ENCODE measurements at regions of chr18 and their contacts with region 1.

Region 1: GRCh38 chr18:13216092-13216582 is 2.4 kb upstream of the LDLRAD4 start:
- DNase-seq: peak; percentile 42
- H3K4me3 Mint-ChIP-seq: peak overlapping the region; percentile 85
- H3K27ac Mint-ChIP-seq: peak overlapping the region; percentile 83
- H3K4me1 Mint-ChIP-seq: peaks cover 26% of the 10 kb centered on the region
- H3K27me3 Mint-ChIP-seq: peaks cover 34% of the 10 kb centered on the region

Region 2: GRCh38 chr18:13137670-13138419 is 78.3 kb before region 1 on chr18:
- intact Hi-C with region 1: loop called (anchors 5 kb)
- DNase-seq: peak; percentile 76
- H3K4me3 Mint-ChIP-seq: peak overlapping the region; percentile 96
- H3K27ac Mint-ChIP-seq: peak overlapping the region; percentile 83
- H3K4me1 Mint-ChIP-seq: peaks cover 20% of the 10 kb centered on the region
- H3K27me3 Mint-ChIP-seq: peaks cover 12% of the 10 kb centered on the region

Region 3: GRCh38 chr18:13289481-13290205 is 73.5 kb after region 1 on chr18:
- intact Hi-C with region 1: loop called (anchors 1 kb)
- DNase-seq: no peak
- H3K4me3 Mint-ChIP-seq: no peak overlapping the region
- H3K27ac Mint-ChIP-seq: peak overlapping the region; percentile 64
- H3K4me1 Mint-ChIP-seq: peaks cover 55% of the 10 kb centered on the region
- H3K27me3 Mint-ChIP-seq: no peaks in the 10 kb centered on the region

Region 4: GRCh38 chr18:13435596-13436327 is 219.6 kb after region 1 on chr18:
- intact Hi-C with region 1: loop called (anchors 1 kb)
- DNase-seq: no peak
- H3K4me3 Mint-ChIP-seq: no peak overlapping the region
- H3K27ac Mint-ChIP-seq: peak overlapping the region; percentile 54
- H3K4me1 Mint-ChIP-seq: peaks cover 56% of the 10 kb centered on the region
- H3K27me3 Mint-ChIP-seq: no peaks in the 10 kb centered on the region

Region 5: GRCh38 chr18:13558124-13558523 is 342.0 kb after region 1 on chr18:
- intact Hi-C with region 1: loop called (anchors 2 kb)
- DNase-seq: no peak
- H3K4me3 Mint-ChIP-seq: no peak overlapping the region
- H3K27ac Mint-ChIP-seq: no peak overlapping the region
- H3K4me1 Mint-ChIP-seq: peaks cover 28% of the 10 kb centered on the region
- H3K27me3 Mint-ChIP-seq: no peaks in the 10 kb centered on the region

Region 6: GRCh38 chr18:13726232-13726971 is 510.3 kb after region 1 on chr18 and contains the starts of genes FAM210A and RNMT:
- intact Hi-C with region 1: loop called (anchors 10 kb)
- DNase-seq: peak; percentile 91
- H3K4me3 Mint-ChIP-seq: peak within 1 kb of the TSS; percentile 88
- H3K27ac Mint-ChIP-seq: peak within 1 kb of the TSS; percentile 79
- H3K4me1 Mint-ChIP-seq: peaks cover 49% of the 10 kb centered on the region
- H3K27me3 Mint-ChIP-seq: no peaks in the 10 kb centered on the region
- total RNA-seq, gene FAM210A: 30.3 and 33.8 TPM in 2 replicates
- total RNA-seq, gene RNMT: 54.0 and 54.3 TPM in 2 replicates

Measured in activated T-helper 2 cell treated with anti-CD3 and anti-CD28 coated beads, Interferon-gamma antibody, Interleukin-2, Interleukin-4, amounts not matched to agents 10 μg/mL and 5 μg/mL and 100 μg/mL, durations not matched to agents 14 hours and 24 hours and 36 hours (primary cell).